Activated T-helper 1 cell treated with anti-CD3 and anti-CD28 coated beads, Interleukin-12 subunit alpha, Interleukin-12 subunit beta, Interleukin-2, Interleukin-4 antibody, amounts not matched to agents 30 ng/mL and 10 ng/mL and 1 ng/mL, durations not matched to agents 14 hours and 24 hours and 36 hours (primary cell): ENCODE measurements at regions of chr4 and their contacts with region 1.

Region 1: DNA sequence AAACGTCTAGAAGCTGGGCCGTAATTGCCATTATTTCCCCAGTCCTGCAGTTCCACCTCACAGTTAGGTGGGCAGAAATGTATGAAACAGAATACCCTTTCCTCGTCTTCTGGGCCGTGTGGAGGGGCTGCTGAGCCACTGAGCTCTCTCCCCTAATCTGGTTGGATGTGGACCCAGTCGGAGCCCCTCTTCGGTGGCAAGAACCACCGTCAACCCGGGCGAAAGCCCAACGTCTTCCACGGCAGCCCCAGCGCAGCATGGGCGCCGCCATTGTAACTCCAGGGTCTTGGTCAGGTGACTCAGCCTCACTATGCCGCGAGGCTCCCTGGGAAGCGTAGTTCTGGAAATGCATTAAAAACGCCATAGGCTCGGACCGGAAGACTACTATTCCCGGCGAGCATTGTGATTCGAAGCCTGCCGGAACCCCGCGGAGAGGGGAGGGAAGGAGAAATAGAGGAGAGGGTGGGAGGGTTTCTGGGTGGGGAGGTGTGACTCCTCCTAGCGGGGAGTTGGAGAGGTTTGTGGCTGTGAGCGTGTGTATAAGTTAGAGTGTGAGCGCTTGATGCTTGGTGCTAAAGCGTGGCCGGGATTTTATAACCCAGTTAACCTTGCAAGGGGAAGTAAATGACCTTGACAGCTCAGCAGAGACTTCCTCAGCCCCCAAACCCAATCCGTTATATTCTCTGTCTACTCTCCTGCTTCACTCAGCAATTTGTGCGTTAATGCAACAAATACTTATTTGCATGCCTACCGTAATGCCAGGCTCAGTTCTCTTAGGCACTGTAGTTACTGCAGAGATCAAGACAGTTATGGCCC is at the start of gene GATB:
- DNase-seq: peak; percentile 88
- H3K4me3 Mint-ChIP-seq: peak within 1 kb of the TSS; percentile 98
- H3K27ac Mint-ChIP-seq: peak within 1 kb of the TSS; percentile 97
- H3K4me1 Mint-ChIP-seq: peaks cover 21% of the 10 kb centered on the region
- H3K27me3 Mint-ChIP-seq: peaks cover 6% of the 10 kb centered on the region
- total RNA-seq, gene GATB: 16.1 and 20.0 TPM in 2 replicates

Region 2: DNA sequence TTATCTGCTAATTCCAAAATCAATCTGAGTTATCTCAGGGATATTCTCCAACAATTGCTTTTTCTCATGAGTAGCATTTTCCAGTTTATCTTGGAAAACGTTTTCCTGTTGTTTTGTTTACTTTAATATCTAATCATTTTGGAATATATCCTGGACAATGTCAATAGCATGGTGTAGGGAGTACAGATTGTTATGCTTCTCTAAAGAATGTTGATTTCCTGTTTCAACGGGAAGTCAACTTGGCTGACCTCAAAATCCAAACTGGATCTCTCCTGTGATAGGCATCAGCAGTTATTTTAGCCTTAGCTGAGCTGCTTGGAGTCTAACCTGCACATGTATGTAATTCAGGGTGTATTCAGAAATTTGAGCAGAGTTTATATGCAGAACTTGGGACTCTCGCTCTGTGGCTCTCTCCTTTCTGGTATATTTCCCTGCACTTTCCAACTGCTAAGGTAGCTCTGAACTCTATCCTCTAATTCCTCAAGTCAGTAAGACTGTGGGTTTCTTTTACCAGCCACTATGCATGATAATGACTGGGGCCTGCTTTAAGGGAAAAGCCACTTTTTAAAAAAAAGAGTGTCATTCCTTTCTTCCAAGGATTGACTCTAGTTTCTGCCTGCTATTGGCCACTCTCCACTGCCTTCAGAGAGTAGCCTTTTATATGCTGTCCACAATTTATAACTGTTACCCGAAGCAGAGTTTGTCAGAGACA is 476.2 kb before region 1 on chr4:
- intact Hi-C with region 1: no loop called
- DNase-seq: no peak
- H3K4me3 Mint-ChIP-seq: no peak overlapping the region
- H3K27ac Mint-ChIP-seq: no peak overlapping the region
- H3K4me1 Mint-ChIP-seq: no peaks in the 10 kb centered on the region
- H3K27me3 Mint-ChIP-seq: peaks cover 6% of the 10 kb centered on the region

Region 3: DNA sequence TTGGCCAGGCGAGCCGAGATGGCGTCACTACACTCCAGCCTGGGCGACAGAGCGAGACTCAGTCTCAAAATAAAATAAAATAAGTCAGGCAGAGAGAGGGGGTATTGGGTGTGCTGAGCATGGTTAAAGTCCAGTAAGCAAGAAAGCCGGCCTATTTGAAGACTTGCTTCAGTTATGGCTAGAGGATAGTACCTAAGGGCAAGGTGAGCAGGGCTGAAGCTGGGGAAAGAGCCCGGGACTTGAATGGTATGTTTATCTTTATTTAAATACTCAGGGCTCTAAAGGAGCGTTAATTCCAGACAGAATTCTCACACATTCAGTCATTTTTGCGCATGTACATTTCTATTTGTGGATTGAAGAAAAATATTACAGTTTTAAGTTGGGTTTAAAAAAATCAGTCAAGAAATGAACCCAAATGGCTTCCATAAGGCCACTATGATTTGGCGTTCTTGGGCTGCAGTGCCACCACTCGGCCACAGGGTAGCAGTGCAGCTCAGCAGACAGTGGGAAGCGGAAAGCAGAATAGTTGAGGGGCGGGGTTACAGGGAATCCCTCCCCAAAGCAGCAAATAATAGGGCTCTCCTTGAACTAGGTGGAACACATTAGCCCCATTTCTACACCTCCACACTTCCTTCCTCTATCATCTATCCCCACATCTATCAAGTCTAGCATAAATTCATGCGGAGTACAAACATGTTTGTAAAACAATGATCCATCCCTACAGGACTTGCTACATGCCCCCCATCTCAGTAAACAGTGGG is 398.3 kb before region 1 on chr4:
- intact Hi-C with region 1: loop called (anchors 1 kb)
- DNase-seq: peak; percentile 63
- H3K4me3 Mint-ChIP-seq: no peak overlapping the region
- H3K27ac Mint-ChIP-seq: no peak overlapping the region
- H3K4me1 Mint-ChIP-seq: no peaks in the 10 kb centered on the region
- H3K27me3 Mint-ChIP-seq: peaks cover 12% of the 10 kb centered on the region

Region 4: DNA sequence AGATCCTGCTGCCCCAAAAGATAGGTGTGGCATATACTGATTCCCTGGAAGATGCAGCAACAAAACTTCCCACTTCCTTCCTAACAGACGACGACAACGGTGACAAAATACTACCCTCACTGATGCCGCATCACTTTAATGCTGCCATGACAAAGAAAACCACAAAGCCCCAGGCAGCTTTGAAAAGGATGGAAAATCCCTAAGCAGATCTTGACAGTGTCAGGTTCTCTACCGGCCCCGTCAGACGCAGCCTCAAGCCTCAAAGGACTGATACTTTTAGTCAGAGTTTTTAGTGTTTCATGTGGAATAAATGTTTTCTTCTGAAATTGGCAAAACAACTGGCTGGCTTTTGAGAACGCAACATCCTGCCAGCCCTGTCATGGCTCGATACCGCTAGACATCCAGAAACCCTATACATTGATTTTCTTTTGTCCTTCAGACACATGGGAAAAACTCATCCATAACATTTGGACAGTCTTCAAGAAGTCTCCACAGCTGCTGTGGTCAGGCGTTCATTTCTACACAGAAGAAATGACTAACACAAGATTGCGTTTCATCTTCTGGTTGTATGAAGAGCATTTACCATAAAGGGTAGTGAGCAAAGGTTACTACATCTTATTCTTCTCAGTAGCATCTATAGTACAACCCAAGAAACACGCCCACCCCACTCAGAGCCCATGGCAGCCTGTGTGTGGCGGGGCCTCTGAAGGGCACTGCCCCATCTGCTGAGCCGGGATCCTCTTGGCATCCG is 60.2 kb before region 1 on chr4:
- intact Hi-C with region 1: loop called (anchors 1 kb)
- DNase-seq: peak; percentile 9
- H3K4me3 Mint-ChIP-seq: no peak overlapping the region
- H3K27ac Mint-ChIP-seq: peak overlapping the region; percentile 56
- H3K4me1 Mint-ChIP-seq: peaks cover 8% of the 10 kb centered on the region
- H3K27me3 Mint-ChIP-seq: no peaks in the 10 kb centered on the region

Region 5: GRCh38 chr4:152106113-152106763 is 345.3 kb after region 1 on chr4:
- intact Hi-C with region 1: loop called (anchors 10 kb)
- DNase-seq: no peak
- H3K4me3 Mint-ChIP-seq: no peak overlapping the region
- H3K27ac Mint-ChIP-seq: peak overlapping the region; percentile 3
- H3K4me1 Mint-ChIP-seq: peaks cover 63% of the 10 kb centered on the region
- H3K27me3 Mint-ChIP-seq: no peaks in the 10 kb centered on the region

Region 6: DNA sequence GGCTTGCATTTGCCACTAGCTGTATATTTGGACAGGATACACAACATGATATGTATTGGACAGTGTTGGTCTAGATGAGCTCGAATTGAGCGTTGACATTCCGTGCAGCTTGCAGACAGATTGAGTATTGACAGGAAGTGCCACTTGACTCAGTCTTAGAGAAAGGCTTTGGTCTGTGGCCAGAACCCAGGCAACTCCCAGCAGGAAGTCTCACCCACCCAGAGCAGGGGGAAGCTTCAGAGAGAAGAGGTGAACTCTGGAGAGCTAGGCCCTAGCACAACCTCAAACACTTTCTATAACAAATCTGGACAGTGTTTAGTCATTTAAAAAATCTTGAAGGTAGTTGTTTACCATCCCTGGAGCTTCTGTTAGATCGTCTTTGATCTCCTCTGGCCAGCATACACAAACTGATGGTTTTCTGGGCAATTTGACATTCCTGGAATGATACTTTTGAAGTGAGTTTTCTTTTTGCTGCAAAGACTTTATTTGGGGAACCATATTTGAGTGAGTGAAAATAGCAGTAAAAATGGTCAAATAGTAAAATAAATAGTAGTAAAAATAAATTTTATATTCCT is 494.6 kb after region 1 on chr4:
- intact Hi-C with region 1: loop called (anchors 5 kb)
- DNase-seq: peak; percentile 70
- H3K4me3 Mint-ChIP-seq: no peak overlapping the region
- H3K27ac Mint-ChIP-seq: no peak overlapping the region
- H3K4me1 Mint-ChIP-seq: no peaks in the 10 kb centered on the region
- H3K27me3 Mint-ChIP-seq: no peaks in the 10 kb centered on the region

Region 7: GRCh38 chr4:152556283-152556682 is 795.4 kb after region 1 on chr4:
- intact Hi-C with region 1: loop called (anchors 5 kb)
- DNase-seq: no peak
- H3K4me3 Mint-ChIP-seq: peak overlapping the region; percentile 41
- H3K27ac Mint-ChIP-seq: peak overlapping the region; percentile 77
- H3K4me1 Mint-ChIP-seq: peaks cover 43% of the 10 kb centered on the region
- H3K27me3 Mint-ChIP-seq: no peaks in the 10 kb centered on the region